IMR-90 (cell line): ENCODE measurements at regions of chr5 and their contacts with region 1.

Region 1: DNA sequence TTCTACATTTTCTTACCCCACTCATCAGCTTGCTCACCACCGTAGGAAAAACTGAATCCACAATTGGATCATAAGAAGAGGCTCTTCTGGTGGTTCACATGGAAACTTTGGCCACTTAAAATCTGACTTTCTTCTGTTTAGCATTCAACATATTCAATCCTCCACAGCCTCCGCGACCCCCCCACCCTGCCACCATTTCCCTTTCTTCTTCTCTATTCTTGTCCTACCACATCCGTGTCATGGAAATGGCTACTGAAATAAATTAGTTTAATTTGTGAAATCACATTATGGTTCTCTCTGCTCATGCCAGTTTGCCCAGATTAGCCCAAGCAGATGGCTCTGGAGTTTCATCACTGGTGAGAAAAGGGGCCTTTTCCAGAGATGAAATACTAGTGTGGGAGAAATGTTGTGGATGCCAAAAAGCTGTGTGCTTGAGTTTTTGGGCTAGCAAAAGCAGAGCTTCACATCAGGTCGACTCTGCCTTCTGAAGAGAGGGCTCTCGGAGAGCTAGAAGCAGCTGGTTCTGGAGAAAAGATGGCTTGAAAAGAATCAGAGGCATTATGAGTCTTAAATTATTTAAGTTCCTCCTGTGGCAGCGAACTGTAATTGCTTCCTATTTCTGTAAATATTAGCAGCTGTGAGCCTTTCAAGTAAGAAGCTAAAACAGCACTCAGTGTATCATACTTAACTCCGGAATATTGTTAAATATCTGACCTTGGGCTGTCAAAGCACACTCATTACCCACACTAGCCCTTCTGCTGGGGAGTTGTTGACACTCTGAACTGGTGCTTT is 107.1 kb downstream of the MAT2B start:
- DNase-seq: peak; percentile 16
- ATAC-seq: peak; percentile 44; the same call in 1 of the 2 replicates
- H3K4me3 ChIP-seq: no peak overlapping the region
- H3K27ac ChIP-seq: no peak overlapping the region; the same call in 1 of the 2 replicates
- H3K4me1 ChIP-seq: peaks cover 10% of the 10 kb centered on the region
- H3K27me3 ChIP-seq: no peaks in the 10 kb centered on the region
- CTCF ChIP-seq: no peak
- POLR2A ChIP-seq: no peak
- RAD21 ChIP-seq: no peak

Region 2: DNA sequence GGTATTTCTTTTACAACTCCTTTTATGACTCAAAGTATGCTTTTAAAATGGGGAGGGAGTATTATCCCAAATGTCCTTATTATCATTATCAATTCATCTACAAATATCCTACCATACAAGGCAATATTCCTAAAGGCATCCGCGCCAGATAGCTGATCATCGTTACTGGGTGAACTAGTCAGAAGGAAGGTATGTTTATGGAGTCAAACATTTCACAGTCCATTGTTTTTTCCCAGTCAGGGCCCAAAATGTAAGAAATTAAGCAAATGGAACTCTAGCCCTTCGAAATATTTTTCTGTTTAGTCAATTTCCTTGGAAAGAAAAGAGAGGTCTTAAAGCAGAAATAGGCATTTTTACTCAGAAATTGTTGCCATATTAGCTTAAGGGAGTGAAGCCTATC is 363.7 kb before region 1 on chr5:
- CTCF ChIA-PET with region 1: no interaction called
- POLR2A ChIA-PET with region 1: no interaction called
- dilution Hi-C with region 1: no loop called
- in situ Hi-C with region 1: no loop called
- intact Hi-C with region 1: no loop called
- DNase-seq: no peak
- ATAC-seq: no peak
- H3K4me3 ChIP-seq: no peak overlapping the region
- H3K27ac ChIP-seq: no peak overlapping the region
- H3K4me1 ChIP-seq: no peaks in the 10 kb centered on the region
- H3K27me3 ChIP-seq: no peaks in the 10 kb centered on the region
- CTCF ChIP-seq: no peak
- POLR2A ChIP-seq: no peak
- RAD21 ChIP-seq: no peak

Region 3: GRCh38 chr5:163595932-163596607 is 16.5 kb before region 1 on chr5:
- CTCF ChIA-PET with region 1: no interaction called
- POLR2A ChIA-PET with region 1: no interaction called
- dilution Hi-C with region 1: no loop called
- in situ Hi-C with region 1: no loop called
- intact Hi-C with region 1: loop called (anchors 2 kb)
- DNase-seq: no peak
- ATAC-seq: no peak
- H3K4me3 ChIP-seq: no peak overlapping the region
- H3K27ac ChIP-seq: peak overlapping the region; percentile 97; the same call in 1 of the 2 replicates
- H3K4me1 ChIP-seq: peaks cover 11% of the 10 kb centered on the region
- H3K27me3 ChIP-seq: no peaks in the 10 kb centered on the region
- CTCF ChIP-seq: no peak
- POLR2A ChIP-seq: no peak
- RAD21 ChIP-seq: no peak